ENCODE measurements at regions of chr12 and their contacts with region 1.

Region 1: DNA sequence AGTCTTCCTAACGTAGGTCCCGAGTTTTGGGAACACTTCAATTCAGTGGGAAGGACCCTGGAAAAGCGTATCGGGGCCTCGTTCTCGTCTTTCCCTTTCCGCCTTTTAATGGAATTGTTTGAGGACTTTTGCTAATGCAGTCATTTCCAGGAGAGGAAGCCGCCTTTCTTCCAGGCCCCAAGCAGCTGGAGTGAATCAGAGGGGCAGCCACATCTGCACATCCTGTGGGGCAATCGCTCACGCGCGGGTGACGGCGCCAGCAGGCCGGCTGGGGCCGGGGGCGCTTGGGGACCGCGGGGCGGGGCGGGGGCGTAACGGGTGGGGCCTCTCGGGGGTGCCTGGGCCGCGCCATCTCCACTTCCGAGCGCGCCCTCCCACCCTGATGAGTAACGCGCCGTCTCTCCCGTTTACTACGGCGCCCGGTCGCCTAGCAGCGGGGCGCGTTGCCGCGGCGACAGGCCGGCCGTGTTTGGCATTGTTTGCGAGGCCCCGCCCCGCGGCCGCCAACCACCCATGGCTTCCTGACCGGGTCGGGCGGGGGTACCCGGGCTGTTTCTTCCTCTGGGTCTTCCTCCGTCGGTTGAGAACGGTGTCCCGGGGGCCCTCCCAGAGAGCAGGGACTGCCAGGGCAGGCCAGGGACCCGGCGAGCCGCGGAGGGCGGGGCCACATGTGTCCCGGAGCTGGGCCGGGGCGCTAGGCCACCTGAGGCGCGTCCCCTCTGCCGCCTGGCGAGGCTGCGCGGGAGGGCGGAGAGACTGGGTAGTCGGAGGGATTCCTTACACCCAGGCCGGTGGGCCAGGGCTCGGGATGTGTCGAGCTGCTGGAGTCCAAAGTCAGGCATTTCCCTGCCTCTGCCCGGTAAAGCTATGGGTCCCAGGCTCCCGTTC is 2.3 kb downstream of the GSG1 start:
- DNase-seq: peak; percentile 87
- ATAC-seq: peak; percentile 83
- H3K4me3 Mint-ChIP-seq: peak overlapping the region; percentile 74
- H3K27ac Mint-ChIP-seq: peak overlapping the region; percentile 36
- H3K4me1 Mint-ChIP-seq: peaks cover 46% of the 10 kb centered on the region
- H3K27me3 Mint-ChIP-seq: peaks cover 3% of the 10 kb centered on the region
- CTCF ChIP-seq: no peak

Region 2: GRCh38 chr12:12964255-12964654 is 136.9 kb before region 1 on chr12:
- CTCF ChIA-PET with region 1: no interaction called
- POLR2A ChIA-PET with region 1: no interaction called
- DNase-seq: no peak
- ATAC-seq: no peak
- H3K4me3 Mint-ChIP-seq: no peak overlapping the region
- H3K27ac Mint-ChIP-seq: no peak overlapping the region
- H3K4me1 Mint-ChIP-seq: peaks cover 2% of the 10 kb centered on the region; the same call in 1 of the 2 replicates
- H3K27me3 Mint-ChIP-seq: no peaks in the 10 kb centered on the region; the same call in 1 of the 2 replicates
- CTCF ChIP-seq: no peak

Region 3: DNA sequence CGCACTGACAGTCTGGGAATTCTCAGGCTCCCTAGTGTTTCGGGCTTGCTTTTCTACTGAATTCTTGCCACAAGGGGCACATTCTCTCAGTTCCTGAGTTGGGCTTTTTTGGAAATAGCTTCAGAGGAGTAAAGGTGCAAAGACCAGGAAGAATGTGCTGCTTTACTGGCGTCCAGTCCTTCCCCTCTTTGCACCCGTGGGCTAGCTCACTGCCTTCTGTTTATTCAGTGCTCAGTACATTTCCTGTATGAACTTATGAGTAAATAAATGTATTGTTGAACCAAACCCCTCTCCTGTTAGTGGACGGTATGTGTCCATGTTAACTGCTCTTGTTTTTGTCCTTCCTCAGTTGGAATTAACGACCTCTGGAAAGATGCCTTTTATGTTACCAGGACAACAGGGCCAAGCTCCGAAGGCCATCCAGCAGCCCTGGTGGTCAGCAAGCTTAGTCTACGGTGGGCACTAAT is 21.7 kb before region 1 on chr12:
- CTCF ChIA-PET with region 1: interaction called, 10 read pairs
- POLR2A ChIA-PET with region 1: no interaction called
- DNase-seq: no peak
- ATAC-seq: peak; percentile 95
- H3K4me3 Mint-ChIP-seq: no peak overlapping the region
- H3K27ac Mint-ChIP-seq: peak overlapping the region; percentile 70
- H3K4me1 Mint-ChIP-seq: peaks cover 13% of the 10 kb centered on the region
- H3K27me3 Mint-ChIP-seq: no peaks in the 10 kb centered on the region
- CTCF ChIP-seq: no peak

Region 4: GRCh38 chr12:13223179-13223859 is 122.2 kb after region 1 on chr12:
- CTCF ChIA-PET with region 1: no interaction called
- POLR2A ChIA-PET with region 1: no interaction called
- DNase-seq: no peak
- ATAC-seq: no peak
- H3K4me3 Mint-ChIP-seq: no peak overlapping the region
- H3K27ac Mint-ChIP-seq: no peak overlapping the region
- H3K4me1 Mint-ChIP-seq: no peaks in the 10 kb centered on the region
- H3K27me3 Mint-ChIP-seq: no peaks in the 10 kb centered on the region; the same call in 1 of the 2 replicates
- CTCF ChIP-seq: no peak

Measured in WTC11 (cell line).